Esophagus squamous epithelium (tissue), 5 donors: ENCODE measurements at regions of chr1 and their contacts with region 1.

Region 1: GRCh38 chr1:108512239-108512981 is 47.5 kb upstream of the EEIG2 start:
- DNase-seq: no peak
- H3K4me3 ChIP-seq: no peak overlapping the region
- H3K27ac ChIP-seq: no peak overlapping the region
- H3K4me1 ChIP-seq: peaks cover 0 to 12% (median 0%) of the 10 kb centered on the region in 3 donors
- H3K27me3 ChIP-seq: peaks cover 0 to 4% (median 0%) of the 10 kb centered on the region in 4 donors
- CTCF ChIP-seq: peak; percentile 48 to 87 (median 78)
- POLR2A ChIP-seq: no peak

Region 2: GRCh38 chr1:108559215-108560186 is 47.1 kb after region 1 on chr1 and contains the start of gene EEIG2:
- intact Hi-C with region 1: loop called (anchors 5 kb)
- DNase-seq: peak; percentile 14
- H3K4me3 ChIP-seq: peak within 1 kb of the TSS; percentile 50 to 81 (median 63)
- H3K27ac ChIP-seq: peak within 1 kb of the TSS; percentile 74 to 82 (median 80)
- H3K4me1 ChIP-seq: peaks cover 17 to 36% (median 23%) of the 10 kb centered on the region in 3 donors
- H3K27me3 ChIP-seq: peaks cover 0 to 17% (median 0%) of the 10 kb centered on the region in 4 donors
- CTCF ChIP-seq: peak; percentile 37 to 95 (median 86)
- POLR2A ChIP-seq: peak in 2 of 4 donors; percentile 29 to 55
- total RNA-seq, gene EEIG2: 3.9 to 9.7 (median 5.7) TPM